Endothelial cell of umbilical vein (primary cell): ENCODE measurements at regions of chr3 and their contacts with region 1.

Region 1: DNA sequence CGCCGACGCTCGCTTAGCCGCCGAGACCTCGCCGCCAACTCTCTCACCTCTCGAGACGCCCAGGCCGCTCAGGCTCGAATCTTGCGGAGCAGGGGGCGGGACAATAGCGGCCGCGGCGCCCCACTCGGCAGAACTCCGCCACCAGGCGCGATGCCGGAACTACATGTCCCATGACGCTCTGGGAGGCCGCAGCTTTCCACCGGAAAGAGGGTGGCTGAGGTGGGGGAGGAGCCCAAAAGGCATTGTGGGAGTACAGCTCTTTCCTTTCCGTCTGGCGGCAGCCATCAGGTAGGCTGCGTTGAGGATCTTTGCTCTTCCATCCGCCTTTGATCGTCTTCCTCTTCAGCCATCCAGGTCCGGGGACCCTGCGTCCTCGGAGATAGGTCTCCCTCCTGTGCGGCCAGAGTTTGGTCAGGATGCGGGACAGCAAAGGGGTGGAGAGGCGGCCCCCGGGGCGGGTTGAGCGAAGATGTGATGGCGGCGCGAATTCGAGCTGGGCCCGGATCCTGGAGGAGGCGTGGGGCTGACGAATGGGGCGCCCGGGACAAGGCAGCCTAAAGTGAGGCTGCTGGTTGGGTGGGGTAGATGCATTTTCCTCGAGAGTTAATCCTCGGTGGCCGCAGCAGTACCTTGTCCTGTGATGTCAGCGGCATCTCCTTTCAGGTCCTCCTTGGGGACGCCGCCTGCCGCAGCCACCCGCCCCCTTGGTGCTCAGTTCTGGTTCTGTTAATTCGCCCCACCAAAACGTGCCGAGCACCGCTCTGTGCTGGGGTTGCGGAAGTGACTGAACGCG is at the starts of genes NKIRAS1 and RPL15:
- DNase-seq: peak; percentile 97
- H3K4me3 ChIP-seq: peak within 1 kb of the TSS; percentile 93 to 100 (median 98)
- H3K27ac ChIP-seq: peak within 1 kb of the TSS; percentile 79
- H3K4me1 ChIP-seq: peaks cover 17% of the 10 kb centered on the region
- H3K27me3 ChIP-seq: no peaks in the 10 kb centered on the region
- CTCF ChIP-seq: peak in 1 of 2 donors; percentile 43
- POLR2A ChIP-seq: peak; percentile 99
- total RNA-seq, gene NKIRAS1: 2.8 and 2.9 TPM in 2 replicates
- total RNA-seq, gene RPL15: 1,872 and 1,901 TPM in 2 replicates

Region 2: GRCh38 chr3:23834082-23834870 is 82.8 kb before region 1 on chr3:
- CTCF ChIA-PET with region 1: interaction called, 13 read pairs
- POLR2A ChIA-PET with region 1: interaction called, 5 read pairs
- dilution Hi-C with region 1: no loop called
- intact Hi-C with region 1: no loop called
- DNase-seq: peak; percentile 45
- H3K4me3 ChIP-seq: no peak overlapping the region
- H3K27ac ChIP-seq: no peak overlapping the region
- H3K4me1 ChIP-seq: no peaks in the 10 kb centered on the region
- H3K27me3 ChIP-seq: no peaks in the 10 kb centered on the region
- CTCF ChIP-seq: no peak
- POLR2A ChIP-seq: no peak

Region 3: GRCh38 chr3:23865595-23866450 is 51.3 kb before region 1 on chr3:
- CTCF ChIA-PET with region 1: no interaction called
- POLR2A ChIA-PET with region 1: interaction called, 14 read pairs
- dilution Hi-C with region 1: no loop called
- intact Hi-C with region 1: no loop called
- DNase-seq: peak; percentile 87
- H3K4me3 ChIP-seq: no peak overlapping the region
- H3K27ac ChIP-seq: peak overlapping the region; percentile 4
- H3K4me1 ChIP-seq: peaks cover 48% of the 10 kb centered on the region
- H3K27me3 ChIP-seq: no peaks in the 10 kb centered on the region
- CTCF ChIP-seq: no peak
- POLR2A ChIP-seq: no peak

Region 4: GRCh38 chr3:23938688-23939087 is 21.6 kb after region 1 on chr3:
- CTCF ChIA-PET with region 1: no interaction called
- POLR2A ChIA-PET with region 1: interaction called, 14 read pairs
- dilution Hi-C with region 1: no loop called
- intact Hi-C with region 1: no loop called
- DNase-seq: no peak
- H3K4me3 ChIP-seq: no peak overlapping the region
- H3K27ac ChIP-seq: no peak overlapping the region
- H3K4me1 ChIP-seq: no peaks in the 10 kb centered on the region
- H3K27me3 ChIP-seq: peaks cover 3% of the 10 kb centered on the region in 2 experiments
- CTCF ChIP-seq: no peak
- POLR2A ChIP-seq: no peak

Region 5: DNA sequence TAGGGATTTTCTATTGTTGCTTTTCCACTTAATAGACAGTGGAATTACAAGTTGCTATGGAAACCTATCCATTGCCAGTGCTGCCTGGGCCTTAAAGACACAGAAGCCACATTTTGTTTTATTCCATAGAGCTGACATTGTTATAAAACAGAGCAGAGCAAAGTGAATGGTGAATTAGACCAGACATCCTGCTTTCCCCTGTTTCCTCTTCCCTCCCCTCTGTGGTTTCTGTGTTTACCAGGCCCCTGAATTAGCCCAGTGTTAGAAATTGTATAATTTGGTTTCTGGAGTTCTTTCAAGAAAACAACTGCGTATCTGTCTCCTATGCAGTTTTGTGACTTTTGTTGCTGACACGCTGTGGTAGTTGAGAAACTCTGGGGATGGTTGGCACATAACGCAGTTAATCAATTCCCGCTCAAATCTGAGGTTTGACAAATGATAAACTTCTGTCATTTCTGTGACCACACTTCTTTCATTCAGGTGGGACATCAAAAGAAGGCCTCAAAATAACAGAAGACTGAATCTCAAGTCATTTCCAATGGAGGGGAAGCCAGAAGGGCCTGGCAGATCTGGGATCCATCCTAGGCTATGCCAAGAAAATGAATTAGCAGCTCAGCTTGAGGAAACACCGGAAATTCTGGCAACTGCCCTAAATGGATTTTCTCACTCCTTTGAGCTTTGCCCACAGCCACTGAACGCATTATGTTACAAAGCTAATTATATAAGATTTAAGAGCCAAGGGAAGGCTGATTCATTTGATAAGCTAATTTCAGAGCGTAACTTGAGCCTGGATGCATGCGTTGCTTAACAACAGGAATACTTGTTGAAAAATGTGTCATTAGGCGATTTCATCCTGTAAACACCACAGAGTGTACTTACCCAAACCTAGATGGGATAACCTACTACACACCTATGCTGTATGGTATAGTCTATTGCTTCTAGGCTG is 74.9 kb after region 1 on chr3:
- CTCF ChIA-PET with region 1: no interaction called
- POLR2A ChIA-PET with region 1: interaction called, 13 read pairs
- dilution Hi-C with region 1: no loop called
- intact Hi-C with region 1: loop called (anchors 2 kb)
- DNase-seq: peak; percentile 98
- H3K4me3 ChIP-seq: no peak overlapping the region
- H3K27ac ChIP-seq: peak overlapping the region; percentile 65
- H3K4me1 ChIP-seq: peaks cover 21% of the 10 kb centered on the region
- H3K27me3 ChIP-seq: no peaks in the 10 kb centered on the region
- CTCF ChIP-seq: no peak
- POLR2A ChIP-seq: no peak

Region 6: DNA sequence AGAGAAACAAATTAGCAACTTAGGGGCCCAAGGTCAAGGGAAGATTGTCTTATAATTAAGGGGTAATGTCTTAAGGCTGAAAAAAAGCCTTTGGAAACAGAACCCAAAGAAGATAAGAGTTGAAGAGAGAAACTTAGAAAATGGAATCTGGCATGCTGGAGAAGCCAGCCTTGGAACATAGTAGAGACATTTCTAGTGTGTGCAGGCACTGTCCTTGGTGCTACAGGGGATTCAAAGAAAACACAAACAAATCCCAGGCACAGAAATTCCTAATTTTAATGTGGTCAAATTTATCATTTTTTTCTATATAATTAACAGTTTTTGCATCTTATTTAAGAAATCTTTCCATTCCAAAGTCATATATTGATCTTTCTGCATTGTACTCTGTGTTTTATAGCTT is 117.4 kb after region 1 on chr3:
- CTCF ChIA-PET with region 1: no interaction called
- POLR2A ChIA-PET with region 1: no interaction called
- dilution Hi-C with region 1: no loop called
- intact Hi-C with region 1: no loop called
- DNase-seq: no peak
- H3K4me3 ChIP-seq: no peak overlapping the region
- H3K27ac ChIP-seq: no peak overlapping the region
- H3K4me1 ChIP-seq: no peaks in the 10 kb centered on the region
- H3K27me3 ChIP-seq: no peaks in the 10 kb centered on the region
- CTCF ChIP-seq: no peak
- POLR2A ChIP-seq: no peak

Region 7: DNA sequence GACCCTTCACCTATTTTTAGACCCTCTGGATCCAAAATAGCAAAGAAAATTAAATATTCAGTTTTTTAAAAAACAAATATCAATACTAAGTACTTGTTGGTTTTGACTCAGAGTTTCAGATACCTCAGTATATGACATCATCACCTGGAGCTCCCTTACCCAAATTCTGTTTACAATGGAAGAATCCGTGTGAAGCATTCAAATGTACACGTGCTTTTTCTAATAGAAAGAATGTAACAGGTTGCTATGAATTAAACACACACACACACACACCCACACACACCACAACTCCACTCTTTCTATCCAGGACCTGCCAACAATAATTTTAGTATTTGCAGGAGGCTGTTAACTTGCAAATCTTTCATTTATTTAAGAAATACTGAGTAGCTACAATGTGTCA is 355.8 kb after region 1 on chr3:
- CTCF ChIA-PET with region 1: no interaction called
- POLR2A ChIA-PET with region 1: no interaction called
- dilution Hi-C with region 1: no loop called
- intact Hi-C with region 1: no loop called
- DNase-seq: no peak
- H3K4me3 ChIP-seq: no peak overlapping the region
- H3K27ac ChIP-seq: no peak overlapping the region
- H3K4me1 ChIP-seq: no peaks in the 10 kb centered on the region
- H3K27me3 ChIP-seq: no peaks in the 10 kb centered on the region
- CTCF ChIP-seq: no peak
- POLR2A ChIP-seq: no peak